MCF 10A (cell line): ENCODE measurements at regions of chr9 and their contacts with region 1.

Region 1: DNA sequence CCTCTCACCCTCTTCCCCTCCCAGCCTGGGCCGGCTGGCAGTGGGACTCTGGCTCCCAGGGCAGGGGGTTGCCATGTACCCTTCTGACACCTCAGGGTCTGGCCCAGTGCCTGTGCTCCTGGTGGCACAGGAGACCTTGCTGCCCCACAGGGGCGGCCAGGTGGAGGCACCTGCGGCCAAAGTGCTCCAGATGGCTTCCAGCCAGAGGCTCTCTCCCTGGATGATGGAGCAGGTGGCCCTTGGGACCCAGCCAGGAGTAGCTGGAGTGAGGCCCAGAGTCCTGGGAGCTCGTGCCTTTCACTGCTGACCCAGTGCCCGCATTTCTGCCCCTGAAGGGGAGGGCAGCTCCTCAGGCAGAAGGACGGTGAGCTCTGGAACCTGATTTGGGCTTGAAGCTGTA is 87.3 kb downstream of the NTNG2 start:
- DNase-seq: peak; percentile 36
- H3K4me3 Mint-ChIP-seq: no peak overlapping the region
- H3K27ac Mint-ChIP-seq: no peak overlapping the region
- H3K4me1 Mint-ChIP-seq: no peaks in the 10 kb centered on the region
- H3K27me3 Mint-ChIP-seq: peaks cover 2% of the 10 kb centered on the region
- CTCF ChIP-seq: no peak

Region 2: DNA sequence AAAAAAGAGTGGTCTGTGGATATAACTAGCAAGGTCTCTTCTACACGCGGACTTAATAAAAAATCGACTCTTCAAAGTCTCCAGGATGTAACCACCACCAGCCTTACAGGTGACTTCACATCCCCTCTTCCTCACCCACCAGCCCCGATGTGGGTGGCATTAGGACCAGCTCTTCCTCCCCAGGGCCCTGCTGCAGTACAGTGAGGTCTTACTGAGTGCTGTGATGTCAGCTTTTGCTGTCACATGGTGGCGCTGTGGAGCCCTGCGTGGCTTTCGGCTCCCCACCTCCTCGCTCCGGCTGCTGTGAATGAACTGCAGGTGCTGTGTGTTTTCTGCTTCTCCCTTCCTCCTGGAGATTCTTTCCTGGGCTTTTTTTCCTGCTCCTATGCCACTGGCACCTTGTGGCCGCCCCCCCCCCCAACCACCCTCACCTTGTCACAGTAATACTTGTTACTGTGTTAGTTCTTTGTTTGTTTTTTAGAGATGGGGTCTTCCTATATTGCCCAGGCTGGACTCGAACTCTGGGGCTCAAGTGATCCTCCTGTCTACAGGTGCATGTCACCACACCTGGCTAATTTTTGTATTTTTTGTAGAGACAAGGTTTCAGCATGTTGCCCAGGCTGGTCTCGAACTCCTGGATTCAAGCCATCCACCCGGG is 493.5 kb before region 1 on chr9:
- CTCF ChIA-PET with region 1: interaction called, 42 read pairs
- POLR2A ChIA-PET with region 1: no interaction called
- intact Hi-C with region 1: no loop called
- DNase-seq: peak; percentile 79
- H3K4me3 Mint-ChIP-seq: no peak overlapping the region
- H3K27ac Mint-ChIP-seq: no peak overlapping the region
- H3K4me1 Mint-ChIP-seq: no peaks in the 10 kb centered on the region
- H3K27me3 Mint-ChIP-seq: peaks cover 27% of the 10 kb centered on the region
- CTCF ChIP-seq: peak; percentile 87

Region 3: DNA sequence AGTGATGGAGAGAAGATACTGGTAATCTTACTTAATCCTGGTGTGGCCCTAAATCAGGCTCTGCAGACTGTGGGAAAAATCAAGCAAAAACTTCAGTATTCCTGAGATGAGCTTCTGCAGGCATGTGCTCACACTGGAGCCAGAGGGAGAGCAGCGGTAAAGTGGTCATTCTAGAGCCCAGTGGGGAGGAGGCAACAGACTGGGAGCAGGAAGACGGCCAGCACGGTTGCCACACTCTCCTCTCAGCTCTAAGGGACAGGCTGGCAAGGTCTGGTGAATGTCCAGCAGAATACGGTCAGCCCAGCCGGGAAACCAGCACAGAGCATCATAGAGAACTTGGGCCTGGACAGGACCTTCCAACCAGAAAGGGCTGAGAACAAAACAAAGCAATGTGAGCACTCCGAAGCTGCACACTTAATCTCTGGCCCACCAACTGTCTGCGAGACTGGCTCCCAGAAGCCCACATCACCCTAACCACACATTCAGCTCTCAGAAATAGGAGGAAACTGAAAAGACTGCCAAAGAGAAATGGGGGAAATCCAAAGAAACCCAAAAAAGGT is 199.7 kb before region 1 on chr9:
- CTCF ChIA-PET with region 1: no interaction called
- POLR2A ChIA-PET with region 1: no interaction called
- intact Hi-C with region 1: no loop called
- DNase-seq: no peak
- H3K4me3 Mint-ChIP-seq: no peak overlapping the region
- H3K27ac Mint-ChIP-seq: no peak overlapping the region
- H3K4me1 Mint-ChIP-seq: no peaks in the 10 kb centered on the region
- H3K27me3 Mint-ChIP-seq: no peaks in the 10 kb centered on the region
- CTCF ChIP-seq: no peak

Region 4: DNA sequence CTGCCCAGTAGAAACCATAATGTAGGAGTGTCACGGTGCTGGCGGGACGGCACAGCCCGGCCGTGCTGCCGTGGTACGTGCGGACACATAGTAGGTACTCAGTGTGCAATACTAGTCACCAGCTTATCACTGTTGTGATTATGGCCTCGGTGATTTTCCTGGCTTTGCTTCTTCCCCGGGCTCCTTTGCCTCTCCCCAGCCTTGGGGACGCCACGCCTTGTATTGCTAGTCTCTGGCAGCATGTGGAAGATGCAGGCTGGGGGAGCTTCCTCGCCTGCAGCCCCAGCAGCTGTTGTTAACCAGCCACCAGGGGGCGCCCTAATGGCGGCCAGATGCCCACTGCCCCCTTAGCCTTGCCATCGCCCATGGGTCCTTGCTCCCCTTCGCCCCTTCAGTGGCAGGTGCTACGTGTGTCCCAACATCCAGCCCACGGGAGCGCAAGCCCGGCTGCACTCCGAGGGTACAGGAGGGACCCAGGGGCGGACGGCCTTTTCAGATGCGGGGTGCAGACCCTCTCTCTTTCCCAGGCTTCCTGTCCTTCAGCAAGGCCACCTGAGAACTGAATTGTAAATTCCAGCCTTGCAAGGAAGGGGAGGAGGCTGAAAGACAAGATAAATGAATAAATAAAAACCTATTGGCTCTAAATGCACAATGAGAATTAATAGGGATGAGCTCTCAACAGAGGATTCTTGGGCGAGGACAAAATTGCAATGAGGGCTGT is 79.3 kb before region 1 on chr9:
- CTCF ChIA-PET with region 1: no interaction called
- POLR2A ChIA-PET with region 1: no interaction called
- intact Hi-C with region 1: loop called (anchors 5 kb)
- DNase-seq: peak; percentile 60
- H3K4me3 Mint-ChIP-seq: no peak overlapping the region
- H3K27ac Mint-ChIP-seq: no peak overlapping the region
- H3K4me1 Mint-ChIP-seq: no peaks in the 10 kb centered on the region
- H3K27me3 Mint-ChIP-seq: peaks cover 91% of the 10 kb centered on the region
- CTCF ChIP-seq: peak; percentile 90

Region 5: DNA sequence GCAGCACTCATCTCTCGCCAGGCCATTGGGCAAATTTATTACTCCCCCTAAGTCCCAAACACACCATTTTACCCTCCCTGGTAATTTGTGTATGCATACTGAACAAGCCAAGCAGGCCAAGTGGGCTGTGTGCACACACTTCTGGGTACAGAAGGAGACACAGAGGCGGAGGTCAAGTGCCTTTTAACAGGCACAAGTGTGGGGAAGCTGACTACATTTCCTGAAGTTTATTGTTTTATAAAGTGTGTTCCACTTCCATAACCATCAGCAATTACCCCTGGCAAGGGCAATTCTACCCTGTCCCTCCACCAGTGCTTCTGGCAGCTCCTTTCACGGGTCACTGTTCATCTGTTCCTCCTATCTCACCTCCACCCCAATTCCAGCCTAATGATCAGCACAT is 11.7 kb after region 1 on chr9:
- CTCF ChIA-PET with region 1: interaction called, 11 read pairs
- POLR2A ChIA-PET with region 1: no interaction called
- intact Hi-C with region 1: no loop called
- DNase-seq: no peak
- H3K4me3 Mint-ChIP-seq: no peak overlapping the region
- H3K27ac Mint-ChIP-seq: no peak overlapping the region
- H3K4me1 Mint-ChIP-seq: no peaks in the 10 kb centered on the region
- H3K27me3 Mint-ChIP-seq: no peaks in the 10 kb centered on the region
- CTCF ChIP-seq: no peak

Region 6: DNA sequence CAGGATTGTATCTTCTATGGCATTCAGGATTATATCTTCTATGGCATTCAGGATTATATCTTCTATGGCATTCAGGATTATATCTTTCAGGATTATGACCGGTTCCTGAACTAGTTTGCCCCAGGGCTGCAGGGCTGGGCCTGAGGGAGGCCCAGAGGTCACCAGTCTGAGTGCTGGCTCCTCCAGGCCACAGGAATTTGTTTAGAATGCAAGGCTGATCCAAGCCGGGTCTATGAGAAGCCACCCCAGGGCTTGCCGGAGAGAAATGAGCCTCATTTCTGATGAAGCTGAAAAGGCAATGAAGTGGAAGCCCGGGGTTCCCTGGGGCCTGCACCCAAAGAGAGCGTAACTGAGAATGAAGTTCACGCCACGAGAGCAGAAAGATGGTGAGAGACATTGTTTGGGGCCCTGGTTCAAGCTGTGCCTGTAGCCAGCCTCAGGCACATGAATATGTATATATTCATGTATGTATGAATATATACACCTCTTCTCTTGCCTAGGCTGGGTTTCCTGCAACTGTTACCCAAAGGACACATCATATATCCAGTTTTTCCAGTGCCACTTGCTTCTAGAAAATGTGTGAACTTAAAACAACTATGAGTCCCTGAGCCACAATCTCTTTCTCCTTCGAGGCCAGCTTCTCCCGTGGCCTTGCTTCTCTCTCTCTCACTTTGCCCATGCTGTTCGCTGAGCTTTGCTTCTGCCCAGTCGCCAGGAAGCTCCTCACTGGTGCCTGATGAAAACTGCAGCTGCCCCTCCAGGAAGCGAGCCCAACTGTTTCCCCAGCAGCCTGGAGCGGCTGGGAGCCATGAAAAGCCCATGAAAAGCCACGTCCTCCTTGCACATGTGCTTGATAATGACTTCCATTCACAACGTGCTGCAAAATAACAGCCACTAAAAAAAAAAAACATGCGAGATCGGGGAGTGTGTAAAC is 483.5 kb after region 1 on chr9:
- CTCF ChIA-PET with region 1: no interaction called
- POLR2A ChIA-PET with region 1: no interaction called
- intact Hi-C with region 1: no loop called
- DNase-seq: no peak
- H3K4me3 Mint-ChIP-seq: no peak overlapping the region
- H3K27ac Mint-ChIP-seq: no peak overlapping the region
- H3K4me1 Mint-ChIP-seq: no peaks in the 10 kb centered on the region
- H3K27me3 Mint-ChIP-seq: peaks cover 36% of the 10 kb centered on the region
- CTCF ChIP-seq: no peak